Activated naive CD4-positive, alpha-beta T cell treated with anti-CD3 and anti-CD28 coated beads for 36 hours (primary cell): ENCODE measurements at regions of chr9 and their contacts with region 1.

Region 1: DNA sequence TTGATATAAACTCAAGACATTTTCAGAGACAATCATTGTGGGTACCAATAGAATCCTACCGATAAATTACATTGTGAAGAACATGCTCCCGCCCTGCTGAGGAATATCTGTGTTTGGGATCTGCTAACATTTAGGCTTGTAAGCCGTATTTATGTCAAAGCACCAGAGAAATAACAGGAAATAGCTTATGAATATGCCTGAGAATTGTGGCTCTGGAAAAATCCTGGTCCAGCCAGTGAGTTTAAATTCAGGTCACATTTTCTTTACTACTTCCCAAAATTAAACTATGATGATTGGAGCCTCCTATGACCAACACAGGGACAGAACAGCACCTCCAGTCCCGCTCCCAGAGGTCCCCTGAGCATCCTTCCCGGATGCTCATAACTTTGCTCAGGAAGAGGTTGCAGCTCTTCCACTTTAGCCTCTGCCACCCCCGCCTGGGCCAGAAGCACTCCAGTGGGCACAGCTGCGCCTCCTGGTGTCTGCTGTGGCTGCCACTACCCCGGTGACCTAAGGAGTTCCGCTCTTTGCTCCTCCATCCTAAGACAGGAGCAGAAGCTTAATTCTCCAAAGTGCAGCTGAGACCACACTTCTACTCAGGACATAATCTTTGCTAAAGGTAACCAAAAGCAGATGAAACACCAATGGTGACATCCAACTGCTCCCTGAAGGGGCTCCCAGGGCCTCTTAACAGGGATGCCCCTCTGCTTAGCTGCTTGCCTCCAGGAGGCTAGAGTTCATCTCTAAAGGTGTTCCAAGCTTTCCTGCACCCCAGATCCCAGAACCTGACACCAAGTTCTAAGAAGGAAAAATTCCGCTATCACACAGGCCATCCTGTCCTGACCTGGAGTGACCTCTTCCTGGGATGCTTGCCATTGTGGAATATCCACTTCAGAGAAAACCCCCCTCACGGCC is 58.8 kb downstream of the SLC1A1 start:
- DNase-seq: peak; percentile 21
- H3K4me3 Mint-ChIP-seq: no peak overlapping the region
- H3K27ac Mint-ChIP-seq: no peak overlapping the region
- H3K4me1 Mint-ChIP-seq: peaks cover 44% of the 10 kb centered on the region
- H3K27me3 Mint-ChIP-seq: no peaks in the 10 kb centered on the region

Region 2: DNA sequence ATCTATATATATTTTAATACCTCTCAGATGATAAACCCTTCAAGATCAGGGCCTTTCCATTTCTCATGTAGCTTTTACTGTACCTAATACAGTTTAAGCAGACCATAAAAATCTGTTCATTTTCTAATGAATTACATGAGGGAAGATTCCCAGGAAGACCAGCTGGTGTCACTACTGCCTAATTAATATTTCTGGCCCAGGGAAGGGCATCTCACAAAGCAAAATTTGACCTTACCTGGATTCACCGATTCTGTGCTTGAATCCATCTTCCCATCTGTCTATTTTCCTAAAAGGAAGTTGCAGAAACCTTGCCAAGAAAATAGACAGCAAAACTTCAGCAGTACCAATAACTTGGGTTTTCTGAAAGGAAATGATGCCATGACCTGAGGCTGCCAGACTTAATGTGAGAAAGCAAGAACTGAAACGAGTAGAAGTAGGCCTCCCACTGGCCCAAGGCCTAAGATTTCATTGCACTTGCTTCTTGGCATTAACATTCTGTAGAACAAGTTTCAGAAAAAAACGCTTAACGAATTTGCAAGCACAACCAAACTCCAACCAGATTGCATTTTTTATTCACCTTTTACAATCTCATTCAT is 166.2 kb before region 1 on chr9:
- CTCF ChIA-PET with region 1: no interaction called
- intact Hi-C with region 1: loop called (anchors 1 kb)
- DNase-seq: peak; percentile 21
- H3K4me3 Mint-ChIP-seq: no peak overlapping the region
- H3K27ac Mint-ChIP-seq: no peak overlapping the region
- H3K4me1 Mint-ChIP-seq: peaks cover 1% of the 10 kb centered on the region
- H3K27me3 Mint-ChIP-seq: no peaks in the 10 kb centered on the region